ENCODE measurements at regions of chr3 and their contacts with region 1.

Region 1: GRCh38 chr3:57538452-57538851 is 5.7 kb downstream of the DNAH12 start:
- DNase-seq: peak; percentile 25 to 75
- H3K4me3 ChIP-seq: no peak overlapping the region
- H3K27ac ChIP-seq: 0 out of 2 replicates have a peak overlapping the region, but pooled peaks have one; percentile 13
- H3K4me1 ChIP-seq: peaks cover 14% of the 10 kb centered on the region
- H3K27me3 ChIP-seq: no peaks in the 10 kb centered on the region
- CTCF ChIP-seq: no peak

Region 2: DNA sequence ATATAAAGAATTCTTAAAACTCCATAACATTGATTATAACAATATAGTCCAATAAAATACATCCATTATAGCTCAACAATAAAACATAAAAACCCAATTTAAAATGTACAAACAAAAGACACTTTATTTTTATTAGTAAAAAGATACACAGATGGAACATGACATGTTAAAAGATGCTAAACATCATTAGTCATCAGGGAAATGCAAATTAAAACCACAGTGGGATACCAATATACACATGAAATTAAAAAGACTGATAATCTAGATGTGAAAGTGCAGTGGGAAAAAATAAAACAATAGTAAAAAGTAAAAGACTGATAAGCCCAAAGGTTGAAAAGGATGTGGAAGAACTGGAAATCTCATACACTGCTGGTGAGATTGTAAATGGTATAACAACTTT is 40.5 kb before region 1 on chr3:
- CTCF ChIA-PET with region 1: no interaction called
- POLR2A ChIA-PET with region 1: no interaction called
- intact Hi-C with region 1: loop called (anchors 2 kb)
- DNase-seq: no peak
- H3K4me3 ChIP-seq: no peak overlapping the region
- H3K27ac ChIP-seq: no peak overlapping the region
- H3K4me1 ChIP-seq: no peaks in the 10 kb centered on the region; the same call in 1 of the 2 replicates
- H3K27me3 ChIP-seq: no peaks in the 10 kb centered on the region
- CTCF ChIP-seq: no peak

Measured in PC-9 (cell line).